ENCODE measurements at regions of chr17 and their contacts with region 1.

Region 1: GRCh38 chr17:27245230-27245696 is 48.7 kb upstream of the WSB1 start:
- DNase-seq: peak; percentile 90
- ATAC-seq: peak; percentile 91

Region 2: GRCh38 chr17:27332485-27333409 is 87.5 kb after region 1 on chr17:
- intact Hi-C with region 1: loop called (anchors 1 kb)
- DNase-seq: peak; percentile 99
- ATAC-seq: peak; percentile 97

Measured in Right ventricle myocardium inferior (tissue), 1 donor.